PC-9 (cell line): ENCODE measurements at regions of chr16 and their contacts with region 1.

Region 1: GRCh38 chr16:28524681-28525171 is 14.0 kb downstream of the NUPR1 start:
- DNase-seq: no peak
- H3K4me3 ChIP-seq: no peak overlapping the region
- H3K27ac ChIP-seq: no peak overlapping the region
- H3K4me1 ChIP-seq: peaks cover 48% of the 10 kb centered on the region
- H3K27me3 ChIP-seq: no peaks in the 10 kb centered on the region
- CTCF ChIP-seq: no peak

Region 2: DNA sequence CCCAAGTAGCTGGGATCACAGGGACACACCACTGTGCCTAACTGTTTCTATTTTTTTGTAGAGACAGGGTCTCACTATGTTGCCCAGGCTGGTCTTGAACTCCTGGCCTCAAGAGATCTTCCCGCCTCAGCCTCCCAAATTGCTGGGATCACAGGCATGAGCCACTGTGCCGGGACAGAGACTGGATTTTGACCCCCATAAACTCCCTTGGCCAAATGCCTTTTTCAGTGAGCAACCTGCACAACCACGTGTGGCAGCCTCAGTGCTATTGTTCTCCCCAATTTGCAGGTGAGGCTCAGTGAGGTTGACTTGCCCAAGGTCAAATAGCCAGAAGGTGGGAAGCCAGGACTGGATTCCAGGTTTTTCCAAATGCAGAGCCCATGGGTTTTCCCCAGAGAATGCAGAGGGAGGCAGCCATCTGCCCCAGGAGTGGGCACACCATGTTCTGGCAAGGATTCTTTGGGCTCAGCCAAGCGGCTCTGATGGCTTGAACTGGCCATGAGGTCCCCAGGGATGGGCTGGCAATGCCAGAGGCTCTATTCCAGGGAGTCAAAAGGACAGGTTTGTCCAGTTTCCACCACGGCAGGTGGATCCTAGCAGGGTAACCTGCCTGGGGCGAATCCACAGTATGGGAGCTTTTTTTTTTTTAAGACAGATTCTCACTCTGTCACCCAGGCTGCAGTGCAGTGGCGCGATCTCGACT is 19.9 kb before region 1 on chr16:
- CTCF ChIA-PET with region 1: no interaction called
- POLR2A ChIA-PET with region 1: no interaction called
- intact Hi-C with region 1: loop called (anchors 2 kb)
- DNase-seq: peak; percentile 93 to 97
- H3K4me3 ChIP-seq: peak overlapping the region; percentile 20; the same call in 1 of the 2 replicates
- H3K27ac ChIP-seq: peak overlapping the region; percentile 70
- H3K4me1 ChIP-seq: peaks cover 41% of the 10 kb centered on the region
- H3K27me3 ChIP-seq: no peaks in the 10 kb centered on the region
- CTCF ChIP-seq: no peak